HEK293 (cell line): ENCODE measurements at regions of chr15 and their contacts with region 1.

Region 1: GRCh38 chr15:40928821-40929659 is at the start of gene DLL4:
- H3K4me3 ChIP-seq: peak within 1 kb of the TSS; percentile 49
- H3K27ac ChIP-seq: peak within 1 kb of the TSS; percentile 20; the same call in 1 of the 2 replicates
- H3K4me1 ChIP-seq: no peaks in the 10 kb centered on the region
- CTCF ChIP-seq: no peak; the same call in 1 of the 2 replicates

Region 2: DNA sequence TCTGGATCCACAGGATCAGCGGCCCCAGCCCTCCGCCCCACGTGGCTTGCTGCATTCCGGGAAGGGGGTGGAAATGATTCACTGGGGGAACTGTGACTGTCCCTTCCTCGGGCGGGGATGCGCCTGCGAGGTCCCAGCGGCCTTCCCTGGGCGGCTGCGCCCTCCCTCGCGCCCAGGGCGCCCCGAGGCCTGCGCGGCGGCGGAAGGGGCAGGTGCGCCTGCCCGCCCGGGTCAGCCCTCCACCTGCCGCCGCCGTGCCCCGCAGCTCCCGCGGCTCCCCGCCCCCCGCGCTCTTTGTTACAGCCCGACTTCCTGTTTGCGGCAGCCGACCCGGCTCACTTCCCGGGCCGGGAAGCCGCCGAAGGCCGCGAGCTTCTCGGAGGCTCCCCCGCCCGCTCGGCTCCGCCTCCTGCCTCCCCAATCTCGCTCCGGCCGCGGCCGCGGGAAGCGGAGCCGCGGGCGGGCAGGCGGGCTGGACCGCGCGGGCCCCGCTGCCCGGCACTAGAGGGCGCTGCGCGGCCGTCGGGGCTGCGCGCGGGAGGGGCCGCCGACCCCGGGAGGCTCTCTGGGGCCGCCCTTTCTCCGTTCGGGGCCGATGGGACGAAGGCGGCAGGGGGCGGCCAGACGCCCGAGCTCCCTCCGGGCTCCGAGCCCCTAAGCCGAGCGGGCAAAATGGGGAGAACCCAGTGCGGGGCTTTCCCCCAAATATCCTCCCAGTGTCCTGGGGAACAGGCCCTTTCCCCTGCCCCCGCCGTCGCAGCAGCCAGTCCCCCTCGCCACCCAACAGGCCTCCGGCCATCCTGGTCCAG is 12.7 kb after region 1 on chr15:
- CTCF ChIA-PET with region 1: interaction called, 29 read pairs
- POLR2A ChIA-PET with region 1: interaction called, 58 read pairs
- H3K4me3 ChIP-seq: peak overlapping the region; percentile 41
- H3K27ac ChIP-seq: peak overlapping the region; percentile 73; the same call in 1 of the 2 replicates
- H3K4me1 ChIP-seq: peaks cover 4% of the 10 kb centered on the region; the same call in 1 of the 2 replicates
- CTCF ChIP-seq: peak; percentile 22; the same call in 1 of the 2 replicates